ENCODE measurements at regions of chr12 and their contacts with region 1.

Region 1: DNA sequence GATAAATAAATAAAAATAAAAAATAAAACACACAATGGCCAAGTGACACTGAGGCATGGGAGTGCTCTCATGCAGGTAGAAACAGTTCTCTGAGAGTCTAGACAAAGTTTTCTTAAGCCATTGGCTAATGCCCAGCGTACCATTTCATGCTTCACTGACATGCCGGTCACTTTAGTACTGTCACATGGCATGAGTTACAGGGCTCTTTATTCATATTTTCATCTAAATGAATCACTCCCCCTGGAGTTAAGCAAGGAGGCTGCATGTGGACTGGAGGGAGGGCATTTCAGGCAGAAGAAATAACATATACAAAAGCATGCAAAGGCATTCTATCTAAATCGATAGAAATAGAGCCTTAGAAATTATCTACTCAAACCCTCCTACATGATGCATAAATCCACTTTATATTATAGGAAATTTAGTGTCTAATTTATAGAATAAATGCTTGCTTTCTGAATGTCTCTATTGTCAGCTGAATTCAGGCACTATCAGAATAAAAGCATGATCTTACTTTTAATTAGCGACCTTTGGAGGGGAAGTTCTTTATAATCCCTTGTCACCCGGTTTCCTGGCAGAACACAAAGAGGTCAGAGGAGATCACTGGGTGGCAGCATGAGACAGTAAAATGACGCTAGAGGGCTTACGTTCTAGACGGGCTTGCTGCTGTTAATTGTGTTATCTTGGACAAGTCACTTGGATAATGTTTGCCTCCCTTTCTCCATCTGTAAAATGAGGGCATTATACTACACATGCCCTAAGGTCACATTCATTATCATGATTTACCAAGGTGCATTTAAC is 17.5 kb downstream of the DYRK4 start:
- DNase-seq: peak; percentile 54
- H3K4me3 ChIP-seq: no peak overlapping the region
- H3K27ac ChIP-seq: no peak overlapping the region
- H3K4me1 ChIP-seq: no peaks in the 10 kb centered on the region
- H3K27me3 ChIP-seq: peaks cover 29% of the 10 kb centered on the region; the same call in 1 of the 2 replicates
- CTCF ChIP-seq: peak; percentile 37; the same call in 1 of the 2 replicates
- EP300 ChIP-seq: no peak
- RAD21 ChIP-seq: peak; percentile 76

Region 2: DNA sequence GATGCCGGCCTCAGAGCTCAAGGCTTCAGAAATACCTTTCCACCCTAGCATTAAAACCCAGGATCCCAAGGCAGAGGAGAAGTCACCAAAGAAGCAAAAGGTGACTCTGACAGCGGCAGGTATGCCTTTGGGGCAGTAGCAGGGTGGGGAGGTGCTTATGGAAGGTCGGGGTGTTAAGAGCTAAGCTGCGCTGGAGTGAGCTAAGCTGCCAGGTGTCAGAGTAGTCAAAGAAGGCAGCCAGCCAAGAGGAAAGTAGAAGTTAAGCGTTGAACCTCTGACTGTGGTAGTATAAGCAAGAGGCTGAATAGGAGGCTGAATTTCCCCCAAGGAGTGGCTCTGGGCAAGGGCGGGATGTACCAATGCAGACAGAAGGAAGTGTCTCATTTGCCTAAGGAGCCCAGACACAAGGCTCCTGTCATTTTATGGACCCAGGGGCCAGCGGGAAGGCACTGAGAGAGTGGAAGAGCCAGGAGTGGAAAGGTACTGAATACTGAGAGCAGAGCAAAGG is 11.7 kb after region 1 on chr12:
- CTCF ChIA-PET with region 1: interaction called, 10 read pairs
- POLR2A ChIA-PET with region 1: no interaction called
- DNase-seq: no peak
- H3K4me3 ChIP-seq: no peak overlapping the region
- H3K27ac ChIP-seq: no peak overlapping the region
- H3K4me1 ChIP-seq: no peaks in the 10 kb centered on the region
- H3K27me3 ChIP-seq: peaks cover 23% of the 10 kb centered on the region; the same call in 1 of the 2 replicates
- CTCF ChIP-seq: no peak
- EP300 ChIP-seq: no peak
- RAD21 ChIP-seq: no peak

Region 3: GRCh38 chr12:4763549-4763948 is 184.0 kb after region 1 on chr12:
- CTCF ChIA-PET with region 1: interaction called, 21 read pairs
- POLR2A ChIA-PET with region 1: no interaction called
- DNase-seq: peak; percentile 38
- H3K4me3 ChIP-seq: no peak overlapping the region; a peak in 1 of 4 replicates
- H3K27ac ChIP-seq: no peak overlapping the region
- H3K4me1 ChIP-seq: no peaks in the 10 kb centered on the region
- H3K27me3 ChIP-seq: no peaks in the 10 kb centered on the region; the same call in 1 of the 2 replicates
- CTCF ChIP-seq: no peak
- EP300 ChIP-seq: no peak
- RAD21 ChIP-seq: no peak

Measured in SK-N-SH (cell line).